ENCODE measurements at regions of chr11 and their contacts with region 1.

Region 1: DNA sequence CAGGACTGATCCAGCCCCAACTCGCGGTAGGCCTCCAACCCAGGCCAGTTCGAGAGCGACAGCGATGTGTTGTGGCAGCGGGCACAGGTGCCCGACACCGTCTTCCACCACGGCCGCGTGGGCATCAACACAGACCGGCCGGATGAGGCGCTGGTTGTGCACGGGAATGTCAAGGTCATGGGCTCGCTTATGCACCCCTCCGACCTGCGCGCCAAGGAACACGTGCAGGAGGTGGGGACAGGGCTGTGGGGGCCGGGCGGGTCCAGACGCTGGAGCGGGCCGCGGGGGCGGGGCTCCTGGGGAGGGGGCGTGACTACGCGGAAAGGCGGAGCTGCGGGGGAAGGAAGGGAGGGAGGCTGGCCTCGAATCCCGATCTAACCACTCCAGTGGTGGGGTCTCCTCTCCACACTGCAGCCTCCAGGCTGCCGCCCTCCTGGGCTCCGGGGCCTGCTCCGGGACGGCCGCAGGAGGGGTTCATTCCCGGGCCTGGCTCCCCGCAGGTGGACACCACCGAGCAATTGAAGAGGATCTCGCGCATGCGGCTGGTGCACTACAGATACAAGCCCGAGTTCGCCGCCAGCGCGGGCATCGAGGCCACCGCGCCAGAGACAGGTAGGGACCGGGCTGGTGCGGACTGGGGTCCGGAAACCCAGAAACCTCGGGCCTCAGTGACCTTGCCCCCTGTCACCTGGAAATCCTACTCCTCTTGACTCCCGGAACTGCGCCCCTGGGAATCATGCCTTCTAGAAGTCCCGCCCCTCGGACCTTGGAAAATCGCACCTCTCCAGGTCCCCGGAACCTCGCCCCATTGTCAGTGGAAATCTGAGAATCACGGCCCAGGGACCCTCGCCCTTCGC is 14.9 kb downstream of the TMEM258 start:
- H3K4me3 ChIP-seq: no peak overlapping the region
- H3K27ac ChIP-seq: no peak overlapping the region
- H3K4me1 ChIP-seq: no peaks in the 10 kb centered on the region
- CTCF ChIP-seq: no peak

Region 2: GRCh38 chr11:61747192-61747966 is 30.1 kb before region 1 on chr11:
- CTCF ChIA-PET with region 1: interaction called, 10 read pairs
- POLR2A ChIA-PET with region 1: no interaction called
- H3K4me3 ChIP-seq: no peak overlapping the region
- H3K27ac ChIP-seq: no peak overlapping the region
- H3K4me1 ChIP-seq: no peaks in the 10 kb centered on the region
- CTCF ChIP-seq: peak; percentile 63

Measured in HEK293 (cell line).